Dendritic cell treated with granulocyte-macrophage colony-stimulating factor and Interleukin-4, amounts not matched to agents 40 ng/mL and 50 ng/mL, for 4 days (primary cell): ENCODE measurements at regions of chr7 and their contacts with region 1.

Region 1: DNA sequence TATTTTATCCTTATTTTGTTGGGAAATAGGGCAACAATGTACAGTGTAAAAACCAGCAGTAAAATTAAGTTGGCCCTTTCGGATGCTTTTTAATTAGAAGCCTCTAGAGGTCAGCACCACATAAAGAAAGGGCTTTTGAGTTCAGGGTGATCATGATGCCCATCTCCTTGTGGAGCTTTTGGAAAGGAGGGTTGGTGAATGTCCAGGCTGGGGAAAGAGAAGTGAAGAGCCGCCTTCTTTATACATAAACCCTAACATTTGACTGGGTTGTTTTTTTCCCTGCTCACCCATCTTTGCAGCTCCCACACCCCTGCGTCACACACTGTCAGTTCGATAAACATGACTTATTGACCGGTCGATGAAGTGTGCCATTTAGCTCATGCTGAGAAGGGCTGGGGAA is 29.8 kb downstream of the MTURN start:
- H3K4me3 Mint-ChIP-seq: no peak overlapping the region
- H3K27ac Mint-ChIP-seq: peak overlapping the region; percentile 78
- H3K4me1 Mint-ChIP-seq: peaks cover 88% of the 10 kb centered on the region
- H3K27me3 Mint-ChIP-seq: peaks cover 3% of the 10 kb centered on the region

Region 2: DNA sequence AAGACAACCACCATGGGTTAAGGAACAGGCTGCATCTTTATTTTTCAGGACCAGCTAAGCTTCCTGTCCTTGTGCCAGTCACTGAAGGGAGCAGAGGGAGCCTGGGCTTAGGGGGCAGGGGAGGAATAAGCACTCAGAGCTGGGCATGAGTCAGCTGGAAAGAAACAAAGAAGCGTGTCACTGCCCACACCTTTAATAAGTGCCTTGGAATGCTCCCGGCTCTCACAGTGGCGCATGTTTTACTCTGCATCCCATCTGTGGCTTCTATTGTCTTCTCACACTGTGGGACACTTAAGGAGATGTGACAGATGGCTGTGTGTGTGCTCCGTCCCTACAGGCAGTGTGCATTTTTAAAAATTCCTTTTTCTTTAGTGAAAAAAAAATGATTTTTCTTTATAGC is 41.9 kb after region 1 on chr7:
- intact Hi-C with region 1: no loop called
- H3K4me3 Mint-ChIP-seq: no peak overlapping the region
- H3K27ac Mint-ChIP-seq: no peak overlapping the region
- H3K4me1 Mint-ChIP-seq: peaks cover 29% of the 10 kb centered on the region
- H3K27me3 Mint-ChIP-seq: no peaks in the 10 kb centered on the region

Region 3: GRCh38 chr7:30270921-30271320 is 106.4 kb after region 1 on chr7:
- intact Hi-C with region 1: loop called (anchors 5 kb)
- H3K4me3 Mint-ChIP-seq: no peak overlapping the region
- H3K27ac Mint-ChIP-seq: peak overlapping the region; percentile 31
- H3K4me1 Mint-ChIP-seq: no peaks in the 10 kb centered on the region
- H3K27me3 Mint-ChIP-seq: no peaks in the 10 kb centered on the region

Region 4: GRCh38 chr7:30348083-30348560 is 183.6 kb after region 1 on chr7:
- intact Hi-C with region 1: loop called (anchors 5 kb)
- H3K4me3 Mint-ChIP-seq: peak overlapping the region; percentile 32
- H3K27ac Mint-ChIP-seq: peak overlapping the region; percentile 79
- H3K4me1 Mint-ChIP-seq: peaks cover 33% of the 10 kb centered on the region
- H3K27me3 Mint-ChIP-seq: no peaks in the 10 kb centered on the region

Region 5: GRCh38 chr7:30412810-30413504 is 248.4 kb after region 1 on chr7:
- intact Hi-C with region 1: loop called (anchors 1 kb)
- H3K4me3 Mint-ChIP-seq: no peak overlapping the region
- H3K27ac Mint-ChIP-seq: no peak overlapping the region
- H3K4me1 Mint-ChIP-seq: peaks cover 18% of the 10 kb centered on the region
- H3K27me3 Mint-ChIP-seq: no peaks in the 10 kb centered on the region

Region 6: GRCh38 chr7:30564243-30564892 is 399.8 kb after region 1 on chr7:
- intact Hi-C with region 1: loop called (anchors 5 kb)
- H3K4me3 Mint-ChIP-seq: no peak overlapping the region
- H3K27ac Mint-ChIP-seq: peak overlapping the region; percentile 33
- H3K4me1 Mint-ChIP-seq: peaks cover 9% of the 10 kb centered on the region
- H3K27me3 Mint-ChIP-seq: no peaks in the 10 kb centered on the region